ENCODE measurements at regions of chr9 and their contacts with region 1.

Region 1: DNA sequence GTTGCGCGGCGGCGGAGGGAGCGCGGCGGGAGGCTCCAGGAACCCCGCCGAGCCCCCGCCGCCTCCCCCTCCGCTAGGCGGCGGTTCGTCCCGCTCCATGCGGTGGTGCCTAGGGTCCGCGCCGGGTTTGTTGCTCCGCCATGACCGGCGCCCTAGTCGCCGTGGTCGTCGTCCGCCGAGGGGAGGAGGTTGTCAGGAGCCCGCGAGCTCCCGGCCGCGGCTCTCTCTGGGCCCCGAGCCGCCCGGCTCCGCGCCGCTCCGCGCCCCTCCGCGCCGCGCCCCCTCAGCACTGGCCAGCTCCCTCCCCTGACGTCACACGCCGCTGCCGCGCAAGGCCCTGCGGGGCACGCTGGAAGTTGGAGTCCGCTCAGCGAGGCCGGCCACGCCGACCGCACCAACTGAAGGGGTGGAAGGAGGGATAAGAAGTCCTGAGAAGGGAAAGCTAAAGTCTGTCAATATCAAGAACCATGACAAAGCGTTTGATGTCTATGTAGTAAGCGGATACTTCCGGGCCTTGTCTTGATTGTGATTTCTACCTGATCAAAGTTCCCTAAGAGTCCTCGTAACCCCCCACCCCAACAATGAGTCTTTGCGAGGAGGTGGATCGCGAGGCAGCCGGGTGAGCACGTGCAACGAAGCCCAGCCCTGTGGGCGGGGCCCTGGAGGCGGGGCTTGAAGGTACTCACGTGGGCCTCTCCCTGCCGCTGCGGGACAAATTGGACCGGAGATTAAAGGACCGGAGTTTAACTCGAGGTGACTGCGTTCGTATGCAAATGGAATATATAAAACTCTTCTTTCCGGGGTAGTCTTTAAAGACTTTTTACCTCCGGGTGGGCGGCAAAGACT is at the start of gene NR6A1:
- DNase-seq: peak; percentile 95 to 98 (median 96)
- ATAC-seq: peak; percentile 86
- H3K4me3 ChIP-seq: peak within 1 kb of the TSS; percentile 48
- H3K27ac ChIP-seq: peak within 1 kb of the TSS; percentile 93
- H3K4me1 ChIP-seq: peaks cover 11 to 14% of the 10 kb centered on the region in 2 experiments
- H3K27me3 ChIP-seq: no peaks in the 10 kb centered on the region
- CTCF ChIP-seq: peak; percentile 16 to 33 (median 22); a peak in 3 of 6 replicates
- EP300 ChIP-seq: 0 out of 2 replicates have a peak, but pooled peaks have one; percentile 3
- POLR2A ChIP-seq: peak; percentile 60
- RAD21 ChIP-seq: no peak
- polyA plus RNA-seq, gene NR6A1: 9.7 to 17.7 TPM

Region 2: GRCh38 chr9:124820698-124821623 is 49.7 kb after region 1 on chr9:
- CTCF ChIA-PET with region 1: no interaction called
- POLR2A ChIA-PET with region 1: no interaction called
- in situ Hi-C with region 1: no loop called
- intact Hi-C with region 1: no loop called
- DNase-seq: no peak
- ATAC-seq: no peak
- H3K4me3 ChIP-seq: no peak overlapping the region
- H3K27ac ChIP-seq: no peak overlapping the region
- H3K4me1 ChIP-seq: peaks cover 13 to 14% of the 10 kb centered on the region in 2 experiments
- H3K27me3 ChIP-seq: no peaks in the 10 kb centered on the region
- CTCF ChIP-seq: no peak
- EP300 ChIP-seq: no peak
- POLR2A ChIP-seq: no peak
- RAD21 ChIP-seq: no peak

Region 3: DNA sequence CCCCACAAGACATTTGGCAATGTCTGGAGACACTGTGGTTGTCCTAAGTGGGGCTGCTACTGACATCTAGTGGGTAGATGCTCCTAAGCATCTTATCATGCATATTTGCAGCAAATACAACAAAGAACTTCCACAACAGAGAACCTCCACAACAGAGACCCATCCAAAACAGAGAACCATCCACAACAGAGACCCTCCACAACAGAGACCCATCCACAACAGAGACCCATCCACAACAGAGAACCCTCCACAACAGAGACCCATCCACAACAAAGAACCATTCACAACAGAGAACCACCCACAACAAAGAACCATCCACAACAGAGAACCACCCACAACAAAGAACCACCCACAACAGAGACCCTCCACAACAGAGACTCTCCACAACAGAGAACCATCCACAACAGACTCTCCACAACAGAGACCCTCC is 123.5 kb after region 1 on chr9:
- CTCF ChIA-PET with region 1: interaction called, 15 read pairs
- POLR2A ChIA-PET with region 1: no interaction called
- in situ Hi-C with region 1: no loop called
- intact Hi-C with region 1: loop called (anchors 1 kb)
- DNase-seq: peak in 1 of 4 experiments; percentile 45
- ATAC-seq: peak; percentile 79
- H3K4me3 ChIP-seq: no peak overlapping the region
- H3K27ac ChIP-seq: no peak overlapping the region
- H3K4me1 ChIP-seq: peaks cover 8 to 11% of the 10 kb centered on the region in 2 experiments; a peak in 4 of 5 replicates
- H3K27me3 ChIP-seq: no peaks in the 10 kb centered on the region
- CTCF ChIP-seq: peak; percentile 52 to 67 (median 53); a peak in 5 of 6 replicates
- EP300 ChIP-seq: no peak
- POLR2A ChIP-seq: no peak
- RAD21 ChIP-seq: peak; percentile 43 to 58; a peak in 3 of 4 replicates

Measured in K562 (cell line).